ENCODE measurements at regions of chr15 and their contacts with region 1.

Region 1: DNA sequence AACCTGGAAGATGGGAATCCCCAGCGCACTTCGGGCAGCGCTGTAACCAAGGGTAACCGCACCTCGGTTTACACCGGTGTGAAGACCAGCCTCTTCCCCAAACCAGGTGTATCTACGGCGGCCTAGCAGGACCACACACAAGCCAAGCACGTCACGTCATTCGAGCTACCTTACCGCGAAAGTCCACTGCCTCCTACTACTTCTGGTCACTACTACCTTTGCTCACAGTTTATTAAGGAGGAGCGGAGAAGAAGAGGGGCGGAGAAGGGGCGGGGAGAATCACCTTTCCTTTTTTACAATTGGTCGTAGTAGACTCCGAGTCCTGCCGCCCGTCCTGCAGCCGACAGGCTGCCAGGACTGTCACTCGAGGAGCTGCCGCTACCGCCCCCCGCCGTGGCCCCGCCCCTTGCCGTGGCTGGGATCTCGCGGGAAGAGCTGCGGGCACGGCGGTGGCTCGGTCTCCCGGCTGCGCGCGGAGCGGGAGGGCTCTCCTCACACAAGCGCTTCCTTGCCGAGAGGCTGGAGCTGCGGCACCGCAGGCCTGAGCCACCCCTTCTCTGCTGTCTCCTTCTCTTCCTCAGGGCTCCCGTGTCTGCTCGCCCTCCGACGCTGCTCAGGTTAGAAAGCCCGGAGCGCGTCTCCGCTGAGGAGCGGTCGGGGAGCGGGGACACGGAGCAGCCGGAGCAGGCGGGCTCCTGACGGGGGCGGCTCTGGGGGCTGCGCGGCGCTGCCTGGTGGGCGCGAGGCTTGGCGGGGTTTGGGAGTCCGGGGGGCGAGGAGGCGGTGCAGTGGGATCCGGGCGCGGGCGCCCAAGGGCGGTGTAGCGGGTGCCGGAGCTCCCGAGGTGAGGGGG is at the start of gene GLCE:
- DNase-seq: peak; percentile 94
- H3K4me3 Mint-ChIP-seq: peak within 1 kb of the TSS; percentile 88
- H3K27ac Mint-ChIP-seq: peak within 1 kb of the TSS; percentile 62
- H3K4me1 Mint-ChIP-seq: peaks cover 18% of the 10 kb centered on the region
- H3K27me3 Mint-ChIP-seq: peaks cover 3% of the 10 kb centered on the region
- total RNA-seq, gene GLCE: 2.5 to 2.6 TPM

Region 2: DNA sequence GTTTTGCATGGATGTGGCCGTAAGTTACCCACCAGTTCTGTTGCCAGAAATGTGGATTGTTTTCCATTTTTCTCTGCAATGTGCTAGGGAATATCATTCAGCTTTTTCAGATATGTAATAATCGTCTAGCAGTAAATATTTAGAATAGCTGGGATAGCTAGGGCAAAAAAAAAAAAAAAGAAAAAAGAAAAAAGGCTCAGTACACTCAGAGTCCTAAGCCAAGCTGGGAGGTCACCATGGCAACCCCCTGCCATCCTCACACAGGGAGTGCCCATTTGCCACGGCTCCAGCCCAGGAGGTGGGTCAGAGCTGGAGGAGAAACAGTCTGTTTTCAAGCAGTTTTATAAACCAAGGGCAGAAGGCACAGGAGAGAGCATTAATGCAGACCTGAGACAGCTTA is 163.6 kb after region 1 on chr15:
- CTCF ChIA-PET with region 1: no interaction called
- intact Hi-C with region 1: loop called (anchors 1 kb)
- DNase-seq: no peak
- H3K4me3 Mint-ChIP-seq: no peak overlapping the region
- H3K27ac Mint-ChIP-seq: no peak overlapping the region
- H3K4me1 Mint-ChIP-seq: peaks cover 20% of the 10 kb centered on the region
- H3K27me3 Mint-ChIP-seq: peaks cover 12% of the 10 kb centered on the region

Region 3: GRCh38 chr15:69394556-69395282 is 234.4 kb after region 1 on chr15:
- CTCF ChIA-PET with region 1: interaction called, 8 read pairs
- intact Hi-C with region 1: loop called (anchors 1 kb)
- DNase-seq: peak; percentile 88
- H3K4me3 Mint-ChIP-seq: no peak overlapping the region
- H3K27ac Mint-ChIP-seq: no peak overlapping the region
- H3K4me1 Mint-ChIP-seq: peaks cover 4% of the 10 kb centered on the region
- H3K27me3 Mint-ChIP-seq: peaks cover 3% of the 10 kb centered on the region

Region 4: DNA sequence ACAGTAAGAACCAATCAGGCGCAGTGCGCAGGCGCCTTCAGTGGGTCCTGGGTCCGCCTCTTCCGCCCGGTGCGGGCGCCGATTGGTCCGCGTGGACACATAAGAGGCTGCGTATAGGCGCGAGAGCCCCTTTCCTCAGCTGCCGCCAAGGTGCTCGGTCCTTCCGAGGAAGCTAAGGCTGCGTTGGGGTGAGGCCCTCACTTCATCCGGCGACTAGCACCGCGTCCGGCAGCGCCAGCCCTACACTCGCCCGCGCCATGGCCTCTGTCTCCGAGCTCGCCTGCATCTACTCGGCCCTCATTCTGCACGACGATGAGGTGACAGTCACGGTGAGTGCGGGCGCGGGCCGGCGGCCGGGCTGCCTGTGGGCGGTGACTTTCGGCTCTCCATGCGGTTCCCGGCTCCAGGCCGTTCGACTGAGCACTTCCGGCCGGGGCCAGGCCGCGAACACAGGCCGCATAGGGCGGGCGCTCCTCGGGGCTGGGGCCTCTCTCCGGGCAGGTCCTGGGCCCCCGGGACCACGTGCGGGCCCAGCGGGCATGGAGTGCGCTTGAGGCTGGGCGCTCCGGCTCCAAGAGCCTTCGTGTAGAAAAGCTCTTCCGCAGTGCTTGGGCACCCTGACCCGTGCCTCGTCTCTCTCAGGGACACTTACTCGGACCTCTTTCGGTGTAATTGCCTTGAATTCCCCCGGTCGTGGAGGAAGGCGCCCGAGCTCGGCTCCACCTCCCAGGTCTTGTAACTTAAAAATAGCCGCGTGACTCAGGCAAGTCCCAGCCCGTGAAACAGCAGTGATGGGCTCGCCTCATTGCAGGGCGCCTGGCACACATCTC is 292.5 kb after region 1 on chr15 and contains the start of gene RPLP1:
- CTCF ChIA-PET with region 1: no interaction called
- intact Hi-C with region 1: loop called (anchors 5 kb)
- DNase-seq: peak; percentile 95
- H3K4me3 Mint-ChIP-seq: peak within 1 kb of the TSS; percentile 99
- H3K27ac Mint-ChIP-seq: peak within 1 kb of the TSS; percentile 99
- H3K4me1 Mint-ChIP-seq: peaks cover 27% of the 10 kb centered on the region
- H3K27me3 Mint-ChIP-seq: no peaks in the 10 kb centered on the region
- total RNA-seq, gene RPLP1: 2,674 to 2,950 TPM

Region 5: GRCh38 chr15:69462493-69463181 is 302.3 kb after region 1 on chr15:
- CTCF ChIA-PET with region 1: no interaction called
- intact Hi-C with region 1: loop called (anchors 2 kb)
- DNase-seq: peak; percentile 93
- H3K4me3 Mint-ChIP-seq: peak overlapping the region; percentile 87
- H3K27ac Mint-ChIP-seq: peak overlapping the region; percentile 87
- H3K4me1 Mint-ChIP-seq: peaks cover 21% of the 10 kb centered on the region
- H3K27me3 Mint-ChIP-seq: no peaks in the 10 kb centered on the region

Region 6: GRCh38 chr15:69713726-69714559 is 553.6 kb after region 1 on chr15:
- CTCF ChIA-PET with region 1: no interaction called
- intact Hi-C with region 1: loop called (anchors 10 kb)
- DNase-seq: peak; percentile 90
- H3K4me3 Mint-ChIP-seq: no peak overlapping the region
- H3K27ac Mint-ChIP-seq: peak overlapping the region; percentile 73
- H3K4me1 Mint-ChIP-seq: peaks cover 55% of the 10 kb centered on the region
- H3K27me3 Mint-ChIP-seq: no peaks in the 10 kb centered on the region